Left cardiac atrium (tissue), 4 donors: ENCODE measurements at regions of chr2 and their contacts with region 1.

Region 1: DNA sequence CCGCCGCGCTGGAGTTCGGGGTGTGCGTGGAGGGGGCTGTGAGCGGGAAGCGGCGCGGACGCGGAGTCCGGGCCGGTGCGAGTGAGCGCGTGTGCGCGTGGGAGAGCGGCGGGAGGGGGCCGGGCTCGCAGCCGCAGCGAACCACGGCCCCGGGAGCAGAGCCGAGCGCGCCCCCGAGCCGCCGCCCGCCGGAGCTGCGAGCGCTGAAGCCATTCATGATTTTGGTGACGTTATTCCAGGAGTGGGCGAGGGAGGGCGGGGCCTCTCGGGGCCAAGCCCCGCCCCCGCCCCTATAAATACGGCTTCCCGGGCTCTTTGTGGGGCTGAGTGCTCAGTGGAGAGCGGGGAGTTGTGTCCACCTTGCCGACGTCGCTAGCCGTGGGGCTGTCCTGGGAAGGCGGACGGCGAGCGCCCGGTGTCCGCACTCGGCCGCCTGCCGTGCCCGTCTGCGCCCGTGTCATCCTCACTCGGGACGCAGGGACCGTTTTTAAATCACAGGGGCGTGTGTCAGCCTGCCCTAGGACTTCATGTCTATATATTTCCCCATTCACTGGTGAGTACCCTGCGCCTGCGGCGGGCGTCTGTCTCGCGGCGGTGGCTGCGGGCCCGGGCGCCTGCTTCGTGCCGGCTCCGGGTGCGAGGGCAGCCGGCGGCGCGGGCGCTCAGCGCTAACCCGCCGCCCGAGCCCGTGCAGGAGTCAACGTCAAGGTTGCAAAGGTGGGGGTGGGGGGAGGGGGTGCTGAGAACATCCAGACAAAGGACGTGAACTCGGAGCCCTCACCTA is at the start of gene LBH:
- DNase-seq: peak; percentile 87
- ATAC-seq: peak; percentile 82 to 84
- total RNA-seq, gene LBH: 14.6 to 19.1 TPM

Region 2: GRCh38 chr2:30346471-30347169 is 115.2 kb after region 1 on chr2:
- intact Hi-C with region 1: loop called in 1 of 2 experiments (anchors 10 kb)
- DNase-seq: peak; percentile 75
- ATAC-seq: peak; percentile 92 to 98